ENCODE measurements at regions of chr7 and their contacts with region 1.

Region 1: DNA sequence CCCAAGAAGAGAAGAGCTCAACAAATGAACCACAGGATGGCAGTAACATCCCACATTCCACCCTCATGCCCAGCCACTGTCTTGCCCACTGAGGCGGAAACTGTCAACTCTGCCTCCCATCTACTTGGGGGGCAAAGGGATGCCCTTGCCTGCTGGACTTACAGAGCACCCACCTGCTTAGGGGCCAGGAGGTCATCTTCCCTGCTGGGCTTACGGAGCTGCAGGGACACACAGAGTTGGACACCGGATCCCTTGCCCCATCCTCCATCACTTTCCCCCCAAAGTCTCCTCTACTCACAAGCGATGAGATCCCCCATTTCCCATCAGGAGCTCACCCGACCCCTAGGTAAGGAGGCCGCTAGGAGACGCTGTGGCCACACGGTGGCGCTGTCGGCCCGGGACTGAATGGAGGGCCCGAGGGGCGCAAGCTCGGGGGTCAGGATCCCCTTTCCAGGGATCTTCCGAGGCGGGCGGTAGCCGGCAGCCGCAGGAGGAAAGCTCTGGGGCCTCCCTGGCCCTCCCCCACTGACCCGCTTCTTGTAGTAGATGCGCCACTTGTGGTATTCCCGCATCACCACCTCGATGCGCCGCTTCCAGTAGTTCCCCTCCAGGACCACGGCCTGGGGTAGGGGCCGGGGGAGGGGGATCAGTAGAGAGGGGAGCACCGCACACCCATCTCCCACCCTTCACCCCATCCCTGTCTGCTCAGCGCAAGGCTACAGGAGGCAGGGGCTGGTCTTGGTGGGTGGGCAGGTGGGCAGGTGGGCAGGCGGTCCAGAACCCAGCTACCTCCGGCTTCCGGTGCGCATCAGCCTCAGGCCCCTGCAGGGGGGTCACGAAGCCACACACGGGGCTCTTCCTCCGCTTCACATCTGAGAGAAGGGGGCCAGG is 17.3 kb downstream of the MLXIPL start:
- DNase-seq: peak; percentile 74
- ATAC-seq: peak; percentile 94
- H3K4me3 Mint-ChIP-seq: no peak overlapping the region
- H3K27ac Mint-ChIP-seq: no peak overlapping the region
- H3K4me1 Mint-ChIP-seq: no peaks in the 10 kb centered on the region
- H3K27me3 Mint-ChIP-seq: peaks cover 25% of the 10 kb centered on the region
- CTCF ChIP-seq: peak; percentile 96

Region 2: DNA sequence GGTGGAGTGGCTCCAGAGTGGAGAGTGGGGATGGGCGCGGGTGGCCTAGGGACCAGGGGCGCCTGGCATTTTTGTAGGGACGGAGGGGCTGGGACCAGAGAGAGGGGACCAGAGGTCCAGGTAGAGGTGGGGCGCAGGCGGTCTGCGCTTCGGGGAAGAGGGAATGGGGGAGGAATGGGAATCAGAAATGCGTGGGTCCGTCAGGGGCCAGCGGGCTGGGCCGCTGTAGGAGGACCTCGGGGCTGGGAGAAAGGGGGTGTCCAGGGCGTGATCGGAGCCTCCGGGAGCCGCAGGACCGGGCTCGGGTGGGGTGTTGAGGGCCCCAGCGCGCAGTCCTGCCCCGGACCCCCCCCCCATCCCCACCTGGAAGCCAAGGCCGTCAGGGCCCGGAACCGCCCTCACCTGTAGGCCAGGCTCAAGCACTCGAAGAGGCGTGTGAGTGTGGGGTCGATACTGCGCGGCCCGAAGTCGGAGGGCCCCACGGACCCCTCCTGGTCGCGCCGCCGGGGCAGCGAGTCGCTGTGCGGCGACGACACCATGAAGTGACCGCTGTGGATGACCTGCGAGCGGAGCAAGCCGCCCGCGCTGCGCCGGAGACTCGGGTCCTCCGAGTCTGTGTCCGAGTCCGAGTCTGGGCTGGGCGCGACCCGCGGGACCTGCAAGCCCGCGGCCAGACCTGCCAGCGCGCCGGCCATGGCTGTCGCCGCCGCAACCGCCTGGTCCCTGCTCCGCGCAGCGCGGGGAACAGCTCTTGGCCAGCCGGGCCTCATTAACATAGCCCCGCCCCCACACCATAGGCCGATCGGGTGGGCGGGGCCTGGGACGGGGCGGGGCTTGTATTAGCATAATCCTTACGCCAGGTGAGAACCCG is 17.0 kb after region 1 on chr7 and contains the start of gene MLXIPL:
- CTCF ChIA-PET with region 1: interaction called, 50 read pairs
- POLR2A ChIA-PET with region 1: no interaction called
- intact Hi-C with region 1: no loop called
- DNase-seq: peak; percentile 81
- ATAC-seq: peak; percentile 95
- H3K4me3 Mint-ChIP-seq: peak within 1 kb of the TSS; percentile 8
- H3K27ac Mint-ChIP-seq: no peak within 1 kb of the TSS
- H3K4me1 Mint-ChIP-seq: peaks cover 7% of the 10 kb centered on the region
- H3K27me3 Mint-ChIP-seq: peaks cover 51% of the 10 kb centered on the region
- CTCF ChIP-seq: no peak
- total RNA-seq, gene MLXIPL: not detected

Region 3: GRCh38 chr7:73667344-73668102 is 60.5 kb after region 1 on chr7 and contains the start of gene VPS37D:
- CTCF ChIA-PET with region 1: interaction called, 37 read pairs
- POLR2A ChIA-PET with region 1: no interaction called
- intact Hi-C with region 1: loop called (anchors 2 kb)
- DNase-seq: peak; percentile 92
- ATAC-seq: peak; percentile 95
- H3K4me3 Mint-ChIP-seq: peak within 1 kb of the TSS; percentile 67
- H3K27ac Mint-ChIP-seq: no peak within 1 kb of the TSS
- H3K4me1 Mint-ChIP-seq: peaks cover 11% of the 10 kb centered on the region
- H3K27me3 Mint-ChIP-seq: peaks cover 30% of the 10 kb centered on the region
- CTCF ChIP-seq: peak; percentile 66
- total RNA-seq, gene VPS37D: 0.87 to 1.1 TPM

Region 4: GRCh38 chr7:73701357-73701995 is 94.4 kb after region 1 on chr7:
- CTCF ChIA-PET with region 1: interaction called, 16 read pairs
- POLR2A ChIA-PET with region 1: no interaction called
- intact Hi-C with region 1: no loop called
- DNase-seq: peak; percentile 51
- ATAC-seq: peak; percentile 49
- H3K4me3 Mint-ChIP-seq: no peak overlapping the region
- H3K27ac Mint-ChIP-seq: no peak overlapping the region
- H3K4me1 Mint-ChIP-seq: peaks cover 7% of the 10 kb centered on the region
- H3K27me3 Mint-ChIP-seq: no peaks in the 10 kb centered on the region
- CTCF ChIP-seq: peak; percentile 63

Region 5: DNA sequence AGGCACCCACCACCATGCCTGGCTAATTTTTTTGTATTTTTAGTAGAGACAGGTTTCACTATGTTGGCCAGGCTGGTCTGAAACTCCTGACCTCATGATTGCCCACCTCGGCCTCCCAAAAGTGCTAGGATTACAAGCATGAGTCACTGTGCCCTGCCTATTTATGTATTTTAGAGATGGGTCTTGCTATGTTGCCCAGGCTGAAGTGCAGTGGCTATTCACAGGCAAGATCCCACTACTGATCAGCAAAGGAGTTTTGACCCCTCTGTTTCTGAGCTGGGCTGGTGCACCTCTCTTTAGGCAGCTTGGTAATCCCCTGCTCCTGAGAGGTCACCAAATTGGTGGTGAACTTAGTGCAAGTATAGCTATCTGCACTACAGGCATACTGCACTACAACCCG is 125.4 kb after region 1 on chr7:
- CTCF ChIA-PET with region 1: interaction called, 84 read pairs
- POLR2A ChIA-PET with region 1: interaction called, 8 read pairs
- intact Hi-C with region 1: loop called (anchors 5 kb)
- DNase-seq: no peak
- ATAC-seq: no peak
- H3K4me3 Mint-ChIP-seq: no peak overlapping the region
- H3K27ac Mint-ChIP-seq: no peak overlapping the region
- H3K4me1 Mint-ChIP-seq: peaks cover 4% of the 10 kb centered on the region
- H3K27me3 Mint-ChIP-seq: peaks cover 8% of the 10 kb centered on the region
- CTCF ChIP-seq: no peak

Region 6: GRCh38 chr7:73885975-73886798 is 279.1 kb after region 1 on chr7:
- CTCF ChIA-PET with region 1: no interaction called
- POLR2A ChIA-PET with region 1: no interaction called
- intact Hi-C with region 1: no loop called
- DNase-seq: no peak
- ATAC-seq: no peak
- H3K4me3 Mint-ChIP-seq: no peak overlapping the region
- H3K27ac Mint-ChIP-seq: no peak overlapping the region
- H3K4me1 Mint-ChIP-seq: peaks cover 8% of the 10 kb centered on the region
- H3K27me3 Mint-ChIP-seq: peaks cover 21% of the 10 kb centered on the region
- CTCF ChIP-seq: no peak